Mammary epithelial cell (primary cell): ENCODE measurements at regions of chr3 and their contacts with region 1.

Region 1: DNA sequence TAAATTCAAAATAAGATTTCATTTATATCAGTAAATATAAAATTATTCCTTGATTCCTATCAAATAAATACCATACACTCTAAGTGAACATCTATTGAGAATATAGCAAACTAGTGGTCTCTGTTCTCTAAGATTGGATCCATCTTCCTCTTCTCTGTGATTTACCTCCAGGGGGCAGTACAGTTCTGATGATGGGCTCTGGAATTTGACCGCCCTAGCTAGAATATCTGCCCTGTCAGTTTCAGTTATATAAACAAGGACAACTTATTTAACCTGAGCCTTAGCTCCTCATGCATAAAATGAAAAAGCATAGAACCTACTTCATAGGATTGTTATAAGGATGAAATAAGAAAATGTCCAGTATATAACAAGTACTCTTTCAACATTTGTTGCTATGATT is 171.1 kb upstream of the CCDC54 start:
- DNase-seq: peak; percentile 58
- H3K4me3 ChIP-seq: no peak overlapping the region
- H3K27ac ChIP-seq: no peak overlapping the region
- H3K4me1 ChIP-seq: peaks cover 24% of the 10 kb centered on the region
- H3K27me3 ChIP-seq: no peaks in the 10 kb centered on the region
- CTCF ChIP-seq: peak; percentile 70 to 76

Region 2: DNA sequence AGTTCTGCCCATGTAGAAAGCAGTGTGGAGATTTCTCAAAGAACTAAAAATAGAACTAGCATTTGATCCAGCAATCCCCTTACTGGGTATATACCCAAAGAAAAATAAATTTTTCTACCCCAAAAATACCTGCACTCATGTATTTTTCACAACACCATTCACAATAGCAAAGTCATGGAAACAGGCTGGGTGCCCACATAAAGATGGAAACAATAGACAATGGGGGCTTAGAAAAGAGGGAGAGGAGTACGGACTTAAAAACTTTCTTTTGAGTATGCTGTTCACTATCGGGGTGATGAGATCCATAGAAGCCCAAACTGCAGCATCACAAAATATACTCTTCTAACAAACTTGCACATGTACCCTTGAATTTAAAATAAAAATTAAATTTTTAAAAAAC is 174.0 kb before region 1 on chr3:
- CTCF ChIA-PET with region 1: no interaction called
- dilution Hi-C with region 1: no loop called
- in situ Hi-C with region 1: no loop called
- intact Hi-C with region 1: no loop called
- DNase-seq: no peak
- H3K4me3 ChIP-seq: no peak overlapping the region
- H3K27ac ChIP-seq: no peak overlapping the region
- H3K4me1 ChIP-seq: no peaks in the 10 kb centered on the region
- H3K27me3 ChIP-seq: no peaks in the 10 kb centered on the region
- CTCF ChIP-seq: no peak

Region 3: DNA sequence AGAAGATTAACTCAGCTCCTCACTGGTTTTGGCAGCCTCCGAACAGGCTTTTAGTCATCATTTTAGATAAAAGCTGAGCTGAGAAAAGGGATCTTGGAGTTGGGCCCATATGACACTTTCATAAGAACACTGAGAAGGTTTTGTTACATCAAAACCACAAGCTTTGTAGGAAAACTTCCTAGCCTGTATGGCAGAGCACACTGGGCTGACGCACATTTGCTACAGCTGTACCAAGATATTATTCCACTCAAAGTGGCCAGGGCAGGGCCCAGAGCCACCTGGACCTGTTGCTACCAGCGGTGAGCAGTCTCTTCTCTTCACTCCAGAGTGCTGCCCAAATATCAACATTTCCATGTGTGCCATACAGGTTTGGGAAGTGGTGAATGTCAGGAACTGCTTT is 10.6 kb after region 1 on chr3:
- CTCF ChIA-PET with region 1: no interaction called
- dilution Hi-C with region 1: no loop called
- in situ Hi-C with region 1: no loop called
- intact Hi-C with region 1: no loop called
- DNase-seq: peak; percentile 94
- H3K4me3 ChIP-seq: peak overlapping the region in 1 of 3 experiments; percentile 8
- H3K27ac ChIP-seq: peak overlapping the region; percentile 98
- H3K4me1 ChIP-seq: peaks cover 51% of the 10 kb centered on the region
- H3K27me3 ChIP-seq: no peaks in the 10 kb centered on the region
- CTCF ChIP-seq: no peak

Region 4: DNA sequence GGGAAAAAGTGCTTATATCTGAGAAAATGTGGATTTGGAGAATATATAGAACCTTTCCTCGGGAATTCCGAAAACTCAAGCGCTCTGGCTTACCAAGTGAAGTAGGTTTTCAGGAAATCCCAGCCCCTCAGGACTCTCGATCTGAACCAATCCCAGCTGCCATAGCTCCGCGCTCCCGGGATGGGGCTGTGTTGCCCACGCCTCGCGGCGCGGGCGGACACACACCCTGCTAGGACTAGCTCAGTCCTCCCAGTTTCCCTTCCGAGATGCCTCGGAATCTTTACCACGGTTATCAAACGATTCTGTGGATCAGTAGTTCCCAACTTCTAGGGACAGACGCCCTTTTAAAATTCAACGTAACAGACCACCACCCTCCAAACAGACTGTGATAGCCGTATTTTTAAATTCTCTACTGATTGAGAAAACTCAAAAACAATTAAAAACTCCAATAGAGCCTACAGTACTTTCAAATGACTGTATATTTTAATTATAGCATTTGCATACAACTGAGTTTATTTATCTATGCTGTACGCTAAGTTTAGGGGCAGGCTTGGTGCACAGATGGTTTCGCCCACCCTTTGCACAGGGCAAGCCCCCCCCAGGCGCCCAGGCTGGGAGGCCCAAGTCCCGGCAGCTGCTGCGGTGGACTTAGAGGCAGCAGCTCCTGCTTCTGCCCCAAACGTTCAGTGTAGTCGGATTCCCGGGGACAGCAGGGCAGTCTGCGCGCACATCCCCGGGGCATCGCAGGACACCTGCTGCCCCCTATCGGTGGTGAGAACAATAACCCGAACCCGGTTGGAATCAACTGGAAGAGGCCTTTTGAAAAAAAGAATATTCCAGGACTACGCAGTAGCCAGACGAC is 223.4 kb after region 1 on chr3:
- CTCF ChIA-PET with region 1: interaction called, 6 read pairs
- dilution Hi-C with region 1: no loop called
- in situ Hi-C with region 1: no loop called
- intact Hi-C with region 1: loop called (anchors 1 kb)
- DNase-seq: peak; percentile 75
- H3K4me3 ChIP-seq: peak overlapping the region; percentile 38 to 44 (median 38)
- H3K27ac ChIP-seq: no peak overlapping the region
- H3K4me1 ChIP-seq: peaks cover 32% of the 10 kb centered on the region
- H3K27me3 ChIP-seq: no peaks in the 10 kb centered on the region
- CTCF ChIP-seq: peak; percentile 63 to 91